BJ (cell line): ENCODE measurements at regions of chr2 and their contacts with region 1.

Region 1: GRCh38 chr2:219119422-219120043 is 41.1 kb downstream of the NHEJ1 start:
- DNase-seq: no peak
- H3K4me3 ChIP-seq: no peak overlapping the region
- H3K27me3 ChIP-seq: no peaks in the 10 kb centered on the region
- CTCF ChIP-seq: peak; percentile 78

Region 2: DNA sequence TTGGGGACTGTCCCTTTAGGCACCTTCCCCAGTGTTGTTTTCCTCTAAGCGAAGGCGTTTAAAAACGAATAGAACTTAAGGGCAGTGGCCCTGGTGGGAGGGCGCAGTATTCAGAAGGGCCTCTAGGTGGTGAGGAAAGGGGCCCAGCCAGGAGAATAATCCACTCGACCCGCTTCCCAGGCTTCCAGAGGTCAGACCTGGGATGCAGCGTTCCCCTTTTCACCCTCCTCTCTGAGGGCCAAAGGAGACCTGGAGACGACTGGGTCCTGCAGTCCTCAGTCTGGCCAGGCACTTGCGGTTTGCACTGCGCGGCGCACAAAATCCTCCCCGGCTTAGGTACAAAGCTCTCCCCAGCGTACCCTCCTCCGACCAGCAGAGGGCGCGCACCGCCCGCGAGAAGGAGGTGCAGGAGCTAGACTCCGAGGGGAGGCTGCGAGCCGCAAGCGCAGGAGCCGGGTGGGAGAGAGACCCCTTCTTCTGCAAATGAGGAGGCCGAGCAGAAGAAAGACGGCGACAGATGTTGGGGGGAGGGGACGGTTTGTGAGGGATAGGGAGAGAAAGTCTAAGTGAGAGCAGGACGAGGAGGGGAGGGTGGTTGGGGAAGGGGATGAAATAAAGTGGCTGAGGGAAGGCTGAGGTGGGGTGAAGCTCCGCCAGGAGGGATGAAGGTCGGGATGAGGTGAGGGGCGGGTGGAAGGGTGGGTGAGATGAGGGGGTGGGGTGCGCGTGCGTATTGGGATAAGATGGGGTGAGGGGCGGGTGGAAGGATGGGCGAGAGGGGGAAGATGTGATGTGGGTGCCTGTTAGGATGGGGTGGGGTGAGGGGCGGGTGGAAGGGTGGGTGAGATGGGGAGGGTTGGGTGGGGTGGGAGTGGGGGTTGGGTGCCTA is 139.4 kb before region 1 on chr2:
- CTCF ChIA-PET with region 1: interaction called, 7 read pairs
- POLR2A ChIA-PET with region 1: interaction called, 12 read pairs
- DNase-seq: no peak
- H3K4me3 ChIP-seq: no peak overlapping the region
- H3K27me3 ChIP-seq: peaks cover 53% of the 10 kb centered on the region
- CTCF ChIP-seq: peak; percentile 97

Region 3: GRCh38 chr2:219057709-219058540 is 61.6 kb before region 1 on chr2:
- CTCF ChIA-PET with region 1: interaction called, 168 read pairs
- POLR2A ChIA-PET with region 1: no interaction called
- DNase-seq: no peak
- H3K4me3 ChIP-seq: no peak overlapping the region
- H3K27me3 ChIP-seq: peaks cover 52% of the 10 kb centered on the region
- CTCF ChIP-seq: peak; percentile 93

Region 4: DNA sequence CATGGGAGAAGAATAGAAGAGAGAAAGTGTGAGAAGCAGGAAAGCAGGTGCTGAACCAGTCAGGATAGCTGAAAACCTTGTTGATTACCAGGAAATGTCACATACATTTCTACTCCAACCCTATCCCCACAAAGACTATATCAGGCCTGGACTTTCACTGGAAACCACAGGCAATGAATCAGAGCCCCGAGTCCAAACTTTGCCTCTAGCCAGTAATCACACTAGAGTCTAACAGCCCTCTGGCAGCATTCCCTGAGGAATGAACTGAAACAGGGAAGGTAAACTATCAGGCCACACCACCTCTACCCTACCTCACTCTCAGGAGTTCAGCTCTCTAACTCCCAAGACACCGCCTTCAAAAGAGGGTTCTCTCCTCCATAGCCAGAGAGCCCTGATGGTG is 40.1 kb before region 1 on chr2:
- CTCF ChIA-PET with region 1: interaction called, 156 read pairs
- POLR2A ChIA-PET with region 1: no interaction called
- DNase-seq: no peak
- H3K4me3 ChIP-seq: no peak overlapping the region
- H3K27me3 ChIP-seq: no peaks in the 10 kb centered on the region
- CTCF ChIP-seq: no peak

Region 5: DNA sequence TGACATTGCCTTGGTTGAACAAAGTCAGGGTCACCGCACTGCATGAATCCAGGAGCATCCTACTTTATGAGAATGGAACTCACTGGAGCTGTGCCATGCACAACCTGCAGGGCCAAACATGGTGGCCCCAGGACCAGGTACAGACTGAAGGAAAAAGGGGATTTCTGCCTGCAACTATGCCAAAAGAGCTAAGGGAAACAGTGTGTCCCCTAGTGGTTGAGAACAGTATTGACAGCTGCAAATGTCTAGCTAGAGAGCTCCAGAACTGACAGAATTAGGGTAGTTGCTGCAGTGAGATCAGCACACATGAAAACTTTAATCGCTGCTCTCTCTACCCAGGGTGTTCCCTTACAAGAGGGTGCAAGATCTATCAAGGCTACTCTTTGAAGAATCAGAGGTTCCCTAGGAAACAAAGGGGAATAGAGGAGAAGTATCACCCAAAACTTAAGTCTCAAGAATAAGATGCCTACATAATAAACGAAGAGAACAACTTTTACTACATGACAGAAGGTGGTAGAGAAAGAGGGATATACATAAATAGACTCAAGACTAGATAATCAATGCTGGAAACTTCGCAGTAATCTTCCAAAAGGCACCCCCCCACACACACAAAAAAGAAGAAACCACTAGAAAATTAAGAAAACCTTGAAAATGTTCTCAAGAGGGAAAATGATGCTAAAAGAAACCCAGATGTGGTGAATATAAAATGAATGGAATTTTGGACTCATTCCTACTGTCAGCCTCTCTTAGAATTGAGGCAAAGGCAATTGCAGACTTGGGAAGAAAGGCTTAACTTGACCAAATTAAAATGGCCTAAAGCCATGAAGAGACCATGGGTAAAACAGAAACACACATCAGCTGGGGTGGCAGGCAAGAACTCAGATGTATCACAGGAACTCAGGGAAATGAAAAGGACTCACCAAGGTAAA is 15.2 kb before region 1 on chr2:
- CTCF ChIA-PET with region 1: interaction called, 52 read pairs
- POLR2A ChIA-PET with region 1: no interaction called
- DNase-seq: peak; percentile 40
- H3K4me3 ChIP-seq: no peak overlapping the region
- H3K27me3 ChIP-seq: no peaks in the 10 kb centered on the region
- CTCF ChIP-seq: peak; percentile 80

Region 6: DNA sequence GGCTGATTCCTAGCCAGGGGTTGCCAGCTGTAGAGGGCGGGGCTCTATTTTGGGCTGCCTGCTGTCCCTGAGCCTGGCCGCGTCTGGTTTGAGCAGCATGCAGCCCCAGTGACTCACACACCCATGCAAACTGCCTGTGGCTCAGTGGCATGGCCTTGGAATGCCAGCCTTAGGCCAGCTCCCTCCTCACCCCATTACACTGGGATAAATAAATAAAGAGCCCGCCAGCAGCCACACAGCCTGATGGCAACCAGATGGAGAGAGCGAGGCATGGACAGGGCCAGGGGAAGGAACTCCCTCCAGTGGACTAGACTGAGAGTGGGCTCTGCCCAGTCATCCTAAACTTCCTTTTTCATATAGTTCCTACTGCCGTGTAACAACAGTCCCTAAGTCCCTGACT is 22.8 kb after region 1 on chr2:
- CTCF ChIA-PET with region 1: interaction called, 30 read pairs
- POLR2A ChIA-PET with region 1: no interaction called
- DNase-seq: peak; percentile 76
- H3K4me3 ChIP-seq: no peak overlapping the region
- H3K27me3 ChIP-seq: no peaks in the 10 kb centered on the region
- CTCF ChIP-seq: peak; percentile 59

Region 7: GRCh38 chr2:219701847-219702634 is 582.5 kb after region 1 on chr2:
- CTCF ChIA-PET with region 1: no interaction called
- POLR2A ChIA-PET with region 1: no interaction called
- DNase-seq: no peak
- H3K4me3 ChIP-seq: no peak overlapping the region
- H3K27me3 ChIP-seq: no peaks in the 10 kb centered on the region
- CTCF ChIP-seq: no peak